ENCODE measurements at regions of chr14 and their contacts with region 1.

Region 1: GRCh38 chr14:50452979-50453705 is 56.5 kb upstream of the CDKL1 start:
- DNase-seq: peak; percentile 80
- ATAC-seq: peak; percentile 82
- H3K4me3 ChIP-seq: 0 out of 2 replicates have a peak overlapping the region, but pooled peaks have one; percentile 10
- H3K27ac ChIP-seq: peak overlapping the region; percentile 94
- H3K4me1 ChIP-seq: peaks cover 31% of the 10 kb centered on the region
- H3K27me3 ChIP-seq: no peaks in the 10 kb centered on the region
- CTCF ChIP-seq: no peak

Region 2: GRCh38 chr14:50342221-50343078 is 110.7 kb before region 1 on chr14:
- CTCF ChIA-PET with region 1: interaction called, 11 read pairs
- POLR2A ChIA-PET with region 1: no interaction called
- intact Hi-C with region 1: loop called (anchors 5 kb)
- DNase-seq: peak; percentile 86
- ATAC-seq: peak; percentile 95
- H3K4me3 ChIP-seq: peak overlapping the region; percentile 13; the same call in 1 of the 2 replicates
- H3K27ac ChIP-seq: no peak overlapping the region
- H3K4me1 ChIP-seq: peaks cover 22% of the 10 kb centered on the region
- H3K27me3 ChIP-seq: no peaks in the 10 kb centered on the region
- CTCF ChIP-seq: peak; percentile 72

Region 3: GRCh38 chr14:50475462-50475861 is 22.3 kb after region 1 on chr14:
- CTCF ChIA-PET with region 1: no interaction called
- POLR2A ChIA-PET with region 1: no interaction called
- intact Hi-C with region 1: loop called (anchors 1 kb)
- DNase-seq: peak; percentile 95
- ATAC-seq: peak; percentile 100
- H3K4me3 ChIP-seq: no peak overlapping the region
- H3K27ac ChIP-seq: peak overlapping the region; percentile 26
- H3K4me1 ChIP-seq: peaks cover 11% of the 10 kb centered on the region; the same call in 1 of the 2 replicates
- H3K27me3 ChIP-seq: no peaks in the 10 kb centered on the region
- CTCF ChIP-seq: no peak

Region 4: DNA sequence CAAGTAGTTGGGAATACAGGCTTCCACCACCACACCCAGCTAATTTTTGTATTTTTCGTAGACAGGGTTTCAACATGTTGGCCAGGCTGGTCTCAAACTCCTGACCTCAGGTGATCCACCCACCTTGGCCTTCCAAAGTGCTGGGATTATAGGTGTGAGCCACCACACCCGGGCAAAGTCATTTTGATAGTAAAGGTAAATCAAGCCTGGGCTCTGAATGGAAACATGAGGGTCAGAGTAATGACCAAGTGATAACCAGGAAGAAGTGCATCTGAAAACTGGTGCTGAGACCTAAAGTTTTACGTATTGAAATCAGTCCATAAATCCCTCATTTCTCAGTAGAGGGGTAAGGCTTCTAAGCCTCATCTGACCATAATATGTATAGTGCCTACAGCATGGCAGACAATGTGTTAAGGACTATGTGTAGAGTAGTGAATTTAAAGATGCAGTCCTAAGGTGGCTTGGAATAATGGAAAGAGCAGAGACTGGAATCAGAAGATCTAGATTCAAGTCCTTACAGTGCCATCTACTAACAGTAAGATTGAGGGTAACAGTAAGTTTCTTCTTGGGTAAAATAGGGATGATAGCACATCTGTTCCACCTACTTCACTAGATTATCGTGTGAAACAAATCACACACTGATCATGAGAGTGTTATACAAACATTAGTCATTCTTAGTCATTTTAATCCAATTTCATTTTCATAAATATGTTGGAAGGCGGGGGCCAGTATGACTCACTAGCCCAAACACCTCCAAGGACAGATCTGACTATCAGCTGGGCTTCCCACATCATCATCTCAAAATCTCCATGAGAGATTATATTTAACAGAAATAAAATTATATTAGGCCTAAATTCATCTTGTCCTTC is 68.0 kb after region 1 on chr14:
- CTCF ChIA-PET with region 1: no interaction called
- POLR2A ChIA-PET with region 1: no interaction called
- intact Hi-C with region 1: loop called (anchors 2 kb)
- DNase-seq: peak; percentile 93
- ATAC-seq: peak; percentile 92
- H3K4me3 ChIP-seq: 0 out of 2 replicates have a peak overlapping the region, but pooled peaks have one; percentile 2
- H3K27ac ChIP-seq: peak overlapping the region; percentile 88
- H3K4me1 ChIP-seq: peaks cover 32% of the 10 kb centered on the region
- H3K27me3 ChIP-seq: no peaks in the 10 kb centered on the region
- CTCF ChIP-seq: no peak